ENCODE measurements at regions of chr5 and their contacts with region 1.

Region 1: DNA sequence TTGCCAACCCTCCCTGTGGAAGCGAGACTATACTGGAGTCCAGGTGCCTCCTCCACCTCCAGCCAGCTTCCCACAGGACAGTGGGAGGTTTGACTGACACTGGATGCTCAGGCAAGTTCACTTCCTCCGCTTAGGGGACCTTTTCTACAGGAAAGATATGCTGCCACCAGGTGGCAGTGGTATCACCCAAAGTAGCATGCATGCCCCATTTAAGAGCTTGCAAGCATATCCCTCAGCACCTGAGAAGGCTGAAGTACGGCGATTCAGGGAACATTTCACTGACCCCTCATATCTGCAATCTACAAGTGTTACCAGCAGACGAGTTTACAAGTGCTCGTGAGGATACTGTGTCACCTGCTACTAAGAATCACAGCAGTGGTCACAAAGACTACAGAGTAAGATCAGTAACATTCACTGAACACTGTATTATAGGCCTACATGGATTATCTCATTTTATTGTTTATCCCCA is 75.5 kb downstream of the KLHL3 start:
- DNase-seq: peak; percentile 86
- ATAC-seq: peak; percentile 99
- H3K4me3 ChIP-seq: no peak overlapping the region
- H3K27ac ChIP-seq: no peak overlapping the region
- H3K4me1 ChIP-seq: peaks cover 0 to 9% of the 10 kb centered on the region in 2 experiments; a peak in 1 of 4 replicates
- H3K27me3 ChIP-seq: 0 out of 2 replicates have a peak, but pooled peaks cover 5% of the 10 kb centered on the region
- CTCF ChIP-seq: peak; percentile 80 to 87 (median 84)
- POLR2A ChIP-seq: no peak
- RAD21 ChIP-seq: peak; percentile 76

Region 2: GRCh38 chr5:137357436-137357835 is 302.9 kb before region 1 on chr5:
- CTCF ChIA-PET with region 1: no interaction called
- POLR2A ChIA-PET with region 1: no interaction called
- RAD21 ChIA-PET with region 1: no interaction called
- intact Hi-C with region 1: no loop called
- DNase-seq: no peak
- ATAC-seq: no peak
- H3K4me3 ChIP-seq: no peak overlapping the region
- H3K27ac ChIP-seq: no peak overlapping the region
- H3K4me1 ChIP-seq: no peaks in the 10 kb centered on the region
- H3K27me3 ChIP-seq: peaks cover 77% of the 10 kb centered on the region
- CTCF ChIP-seq: no peak
- POLR2A ChIP-seq: no peak
- RAD21 ChIP-seq: no peak

Region 3: GRCh38 chr5:137487600-137487999 is 172.8 kb before region 1 on chr5:
- CTCF ChIA-PET with region 1: no interaction called
- POLR2A ChIA-PET with region 1: no interaction called
- RAD21 ChIA-PET with region 1: no interaction called
- intact Hi-C with region 1: no loop called
- DNase-seq: no peak
- ATAC-seq: no peak
- H3K4me3 ChIP-seq: no peak overlapping the region
- H3K27ac ChIP-seq: no peak overlapping the region
- H3K4me1 ChIP-seq: no peaks in the 10 kb centered on the region
- H3K27me3 ChIP-seq: peaks cover 7% of the 10 kb centered on the region; the same call in 1 of the 2 replicates
- CTCF ChIP-seq: no peak
- POLR2A ChIP-seq: no peak
- RAD21 ChIP-seq: no peak

Region 4: DNA sequence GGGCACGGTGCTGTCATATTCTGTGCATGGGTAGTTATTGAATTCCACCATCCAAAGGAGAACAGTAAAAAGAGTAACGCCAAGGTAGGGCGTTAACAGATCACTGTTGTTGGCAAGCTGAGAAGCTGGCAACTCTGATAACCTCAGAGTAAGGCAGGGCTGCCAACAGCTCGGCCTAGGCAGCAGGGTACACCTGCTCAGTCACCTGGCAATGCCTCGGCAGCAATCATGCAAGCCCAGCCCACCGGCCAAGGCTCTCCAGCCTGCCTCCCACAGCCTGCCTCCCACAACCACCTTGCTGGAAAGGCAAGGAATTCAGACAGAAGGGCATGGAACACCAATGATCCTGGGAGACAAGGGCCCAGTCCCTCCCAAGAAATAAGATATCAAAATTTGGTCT is 11.6 kb after region 1 on chr5:
- CTCF ChIA-PET with region 1: interaction called, 12 read pairs
- POLR2A ChIA-PET with region 1: interaction called, 5 read pairs
- RAD21 ChIA-PET with region 1: no interaction called
- intact Hi-C with region 1: no loop called
- DNase-seq: no peak
- ATAC-seq: no peak
- H3K4me3 ChIP-seq: no peak overlapping the region
- H3K27ac ChIP-seq: no peak overlapping the region
- H3K4me1 ChIP-seq: no peaks in the 10 kb centered on the region
- H3K27me3 ChIP-seq: peaks cover 4% of the 10 kb centered on the region; the same call in 1 of the 2 replicates
- CTCF ChIP-seq: no peak
- POLR2A ChIP-seq: no peak
- RAD21 ChIP-seq: no peak

Region 5: DNA sequence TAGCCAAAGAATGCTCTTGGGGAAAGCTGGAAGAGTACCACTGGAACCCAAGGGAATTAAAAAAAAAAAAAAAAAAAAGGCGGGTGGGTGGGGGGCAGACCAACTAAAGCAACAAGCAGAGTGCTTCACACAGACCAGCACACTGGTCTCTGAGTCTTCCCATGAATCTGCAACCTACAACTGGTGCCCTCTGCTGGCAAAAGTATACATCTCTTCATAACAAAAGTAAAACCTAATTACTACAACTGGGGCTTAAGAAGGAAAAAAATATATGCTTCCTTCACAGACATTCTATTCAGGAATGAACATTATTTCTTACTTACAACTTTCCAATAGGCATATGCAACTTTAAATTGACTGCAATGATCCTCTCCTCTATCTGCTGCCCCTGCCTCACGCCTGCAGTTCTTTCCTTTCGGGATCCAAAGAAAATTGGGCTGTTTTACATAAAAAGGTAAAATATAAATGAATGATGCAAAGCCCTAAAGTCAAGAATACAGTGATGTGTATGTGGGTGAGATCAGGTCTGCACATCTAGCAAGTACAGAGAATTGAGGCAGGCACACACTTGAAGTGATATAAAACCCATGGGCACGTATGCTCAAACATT is 82.8 kb after region 1 on chr5:
- CTCF ChIA-PET with region 1: interaction called, 83 read pairs
- POLR2A ChIA-PET with region 1: interaction called, 8 read pairs
- RAD21 ChIA-PET with region 1: interaction called, 6 to 20 read pairs
- intact Hi-C with region 1: loop called (anchors 1 kb)
- DNase-seq: peak; percentile 59
- ATAC-seq: peak; percentile 88
- H3K4me3 ChIP-seq: no peak overlapping the region
- H3K27ac ChIP-seq: no peak overlapping the region
- H3K4me1 ChIP-seq: no peaks in the 10 kb centered on the region
- H3K27me3 ChIP-seq: no peaks in the 10 kb centered on the region
- CTCF ChIP-seq: peak; percentile 61 to 77 (median 68)
- POLR2A ChIP-seq: no peak
- RAD21 ChIP-seq: peak; percentile 65

Region 6: DNA sequence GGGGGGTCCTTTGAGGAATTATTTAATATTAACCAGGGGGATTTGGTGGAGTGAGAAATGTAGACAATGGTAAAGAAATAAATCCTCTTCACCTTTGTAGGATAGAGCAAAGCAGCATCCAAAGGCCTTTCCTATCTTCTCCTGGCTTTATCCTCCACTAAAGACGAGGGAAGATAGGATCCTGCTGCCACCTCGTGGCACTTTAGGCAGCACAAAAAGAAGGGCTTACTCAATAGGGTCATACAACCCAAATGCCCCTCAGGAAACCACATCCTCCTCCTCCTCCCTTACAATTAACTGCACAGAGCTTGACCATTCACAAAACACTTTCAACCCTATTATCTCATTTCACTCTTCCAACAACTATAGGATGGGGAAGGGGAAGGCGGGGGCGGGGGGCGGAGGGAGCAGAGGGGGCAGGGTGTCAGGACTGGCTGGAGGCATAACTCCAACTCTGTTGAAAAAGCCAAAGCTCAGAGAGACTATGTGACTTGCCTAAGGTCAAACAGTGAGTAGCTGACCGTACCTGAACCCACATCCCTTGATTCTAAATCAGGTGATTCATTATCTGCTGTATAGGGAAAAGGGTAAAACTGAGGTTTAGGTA is 161.9 kb after region 1 on chr5:
- CTCF ChIA-PET with region 1: interaction called, 3 read pairs
- POLR2A ChIA-PET with region 1: no interaction called
- RAD21 ChIA-PET with region 1: interaction called in 1 of 2 experiments, 3 read pairs
- intact Hi-C with region 1: loop called (anchors 1 kb)
- DNase-seq: peak; percentile 40
- ATAC-seq: peak; percentile 90
- H3K4me3 ChIP-seq: no peak overlapping the region
- H3K27ac ChIP-seq: no peak overlapping the region
- H3K4me1 ChIP-seq: 0 out of 4 replicates have a peak, but pooled peaks cover 0 to 4% of the 10 kb centered on the region in 2 experiments
- H3K27me3 ChIP-seq: no peaks in the 10 kb centered on the region
- CTCF ChIP-seq: peak; percentile 47 to 66 (median 59); a peak in 5 of 6 replicates
- POLR2A ChIP-seq: no peak
- RAD21 ChIP-seq: peak; percentile 78